ENCODE measurements at regions of chr3 and their contacts with region 1.

Region 1: GRCh38 chr3:142723968-142724681 is at the start of gene TRPC1:
- DNase-seq: peak; percentile 2 to 93 (median 70)
- ATAC-seq: peak; percentile 96
- H3K4me3 ChIP-seq: peak within 1 kb of the TSS; percentile 54 to 63
- H3K4me3 Mint-ChIP-seq: peak within 1 kb of the TSS; percentile 91
- H3K27ac ChIP-seq: peak within 1 kb of the TSS in 1 of 2 experiments; percentile 63
- H3K27ac Mint-ChIP-seq: peak within 1 kb of the TSS; percentile 92
- H3K4me1 ChIP-seq: peaks cover 9% of the 10 kb centered on the region
- H3K4me1 Mint-ChIP-seq: peaks cover 20% of the 10 kb centered on the region
- H3K27me3 ChIP-seq: peaks cover 0 to 3% of the 10 kb centered on the region in 2 experiments
- H3K27me3 Mint-ChIP-seq: peaks cover 28% of the 10 kb centered on the region
- CTCF ChIP-seq: no peak
- total RNA-seq, gene TRPC1: 3.3 to 3.4 TPM

Region 2: DNA sequence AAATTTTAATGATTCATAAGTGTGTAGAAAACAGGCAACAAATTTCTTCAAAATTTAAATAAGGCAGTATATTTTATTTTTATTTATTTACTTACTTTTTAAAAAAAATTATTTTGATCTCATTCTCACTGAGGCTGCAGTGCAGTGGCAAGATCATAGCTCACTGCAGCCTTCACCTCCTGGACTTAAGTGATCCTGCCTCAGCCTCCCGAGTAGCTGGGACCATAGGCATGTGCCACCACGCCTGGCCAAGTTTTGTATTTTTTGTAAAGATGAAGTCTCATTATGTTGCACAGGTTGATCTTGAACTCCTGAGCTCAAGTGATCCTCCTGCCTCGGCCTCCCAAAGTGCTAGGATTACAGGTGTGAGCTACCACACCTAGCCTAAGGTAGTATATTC is 215.0 kb before region 1 on chr3:
- CTCF ChIA-PET with region 1: no interaction called
- POLR2A ChIA-PET with region 1: no interaction called
- intact Hi-C with region 1: loop called in 1 of 2 experiments (anchors 5 kb)
- DNase-seq: peak in 2 of 9 experiments; percentile 15 to 36
- ATAC-seq: peak; percentile 62
- H3K4me3 ChIP-seq: peak overlapping the region in 1 of 2 experiments; percentile 51
- H3K4me3 Mint-ChIP-seq: peak overlapping the region; percentile 90
- H3K27ac ChIP-seq: peak overlapping the region in 1 of 2 experiments; percentile 74
- H3K27ac Mint-ChIP-seq: peak overlapping the region; percentile 95
- H3K4me1 ChIP-seq: no peaks in the 10 kb centered on the region
- H3K4me1 Mint-ChIP-seq: peaks cover 14% of the 10 kb centered on the region
- H3K27me3 ChIP-seq: no peaks in the 10 kb centered on the region
- H3K27me3 Mint-ChIP-seq: no peaks in the 10 kb centered on the region
- CTCF ChIP-seq: no peak

Region 3: DNA sequence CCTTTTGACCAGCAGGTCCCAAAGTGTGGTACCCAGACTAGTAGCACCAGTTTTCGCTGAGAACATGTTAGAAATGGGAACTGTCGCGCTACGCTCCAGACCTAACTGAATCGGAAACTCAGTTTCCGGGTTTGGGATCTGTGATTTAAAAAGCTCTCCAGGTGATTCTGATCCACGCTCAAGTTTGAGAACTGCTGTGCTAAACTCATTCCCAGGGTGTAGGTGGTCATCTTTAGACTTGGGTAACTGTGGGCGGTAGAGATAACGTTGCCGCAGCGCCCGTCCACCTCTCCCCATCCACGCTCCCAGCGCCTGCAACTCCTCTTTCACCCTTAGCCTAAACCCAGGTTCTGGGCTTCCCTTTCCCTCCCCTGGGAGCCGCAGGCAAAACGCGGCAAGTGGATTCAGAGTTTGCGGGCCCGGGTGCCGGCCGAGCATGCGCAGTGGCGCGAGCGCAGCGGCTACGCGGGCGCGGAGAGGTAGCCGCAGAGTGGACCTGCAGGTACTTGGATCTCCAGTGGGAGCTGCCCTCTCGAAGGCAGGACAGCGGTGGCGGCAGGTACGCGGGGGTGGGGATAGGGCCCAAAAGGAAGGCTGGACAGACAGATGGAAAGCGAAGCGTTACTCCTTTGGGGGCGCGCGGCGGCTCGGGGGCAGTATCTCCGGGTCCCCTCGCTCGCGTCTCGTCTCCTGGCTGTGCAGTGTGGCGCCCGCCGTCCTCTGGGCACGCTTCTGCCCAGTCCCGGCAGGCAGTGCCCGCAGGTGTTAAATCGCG is 128.0 kb before region 1 on chr3 and contains the start of gene PLS1:
- CTCF ChIA-PET with region 1: no interaction called
- POLR2A ChIA-PET with region 1: no interaction called
- intact Hi-C with region 1: loop called (anchors 2 to 5 kb)
- DNase-seq: peak; percentile 74 to 91 (median 83)
- ATAC-seq: peak; percentile 87
- H3K4me3 ChIP-seq: peak within 1 kb of the TSS; percentile 75 to 84
- H3K4me3 Mint-ChIP-seq: peak within 1 kb of the TSS; percentile 96
- H3K27ac ChIP-seq: peak within 1 kb of the TSS; percentile 28 to 34
- H3K27ac Mint-ChIP-seq: peak within 1 kb of the TSS; percentile 89
- H3K4me1 ChIP-seq: peaks cover 17% of the 10 kb centered on the region
- H3K4me1 Mint-ChIP-seq: peaks cover 17% of the 10 kb centered on the region
- H3K27me3 ChIP-seq: no peaks in the 10 kb centered on the region
- H3K27me3 Mint-ChIP-seq: peaks cover 11% of the 10 kb centered on the region
- CTCF ChIP-seq: no peak
- total RNA-seq, gene PLS1: 0.57 to 2.0 TPM

Region 4: GRCh38 chr3:142618917-142619461 is 105.1 kb before region 1 on chr3:
- CTCF ChIA-PET with region 1: no interaction called
- POLR2A ChIA-PET with region 1: no interaction called
- intact Hi-C with region 1: no loop called
- DNase-seq: no peak
- ATAC-seq: no peak
- H3K4me3 ChIP-seq: no peak overlapping the region
- H3K4me3 Mint-ChIP-seq: no peak overlapping the region
- H3K27ac ChIP-seq: no peak overlapping the region
- H3K27ac Mint-ChIP-seq: no peak overlapping the region
- H3K4me1 ChIP-seq: no peaks in the 10 kb centered on the region
- H3K4me1 Mint-ChIP-seq: no peaks in the 10 kb centered on the region
- H3K27me3 ChIP-seq: no peaks in the 10 kb centered on the region
- H3K27me3 Mint-ChIP-seq: no peaks in the 10 kb centered on the region
- CTCF ChIP-seq: no peak

Region 5: DNA sequence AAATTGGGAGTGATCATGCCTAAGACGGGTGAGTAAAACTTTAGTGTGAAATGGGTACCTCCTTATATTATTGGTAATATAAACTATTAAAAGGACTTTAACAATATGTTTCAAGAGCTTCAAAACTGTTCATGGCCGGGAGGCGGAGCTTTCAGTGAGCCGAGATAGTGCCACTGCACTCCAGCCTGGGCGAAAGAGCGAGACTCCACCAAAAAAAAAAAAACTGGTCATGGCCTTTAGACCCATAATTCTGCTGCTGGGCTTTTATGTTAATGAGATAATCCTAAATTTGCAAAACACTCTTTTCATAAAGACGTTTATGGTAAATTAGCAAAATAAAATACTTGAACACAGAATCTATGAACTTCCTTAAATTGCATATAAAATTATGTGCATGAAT is 22.5 kb after region 1 on chr3:
- CTCF ChIA-PET with region 1: no interaction called
- POLR2A ChIA-PET with region 1: no interaction called
- intact Hi-C with region 1: no loop called
- DNase-seq: no peak
- ATAC-seq: no peak
- H3K4me3 ChIP-seq: no peak overlapping the region
- H3K4me3 Mint-ChIP-seq: no peak overlapping the region
- H3K27ac ChIP-seq: no peak overlapping the region
- H3K27ac Mint-ChIP-seq: no peak overlapping the region
- H3K4me1 ChIP-seq: no peaks in the 10 kb centered on the region
- H3K4me1 Mint-ChIP-seq: no peaks in the 10 kb centered on the region
- H3K27me3 ChIP-seq: no peaks in the 10 kb centered on the region
- H3K27me3 Mint-ChIP-seq: no peaks in the 10 kb centered on the region
- CTCF ChIP-seq: no peak

Region 6: GRCh38 chr3:143433787-143434378 is 709.8 kb after region 1 on chr3:
- CTCF ChIA-PET with region 1: no interaction called
- POLR2A ChIA-PET with region 1: no interaction called
- intact Hi-C with region 1: no loop called
- DNase-seq: peak in 2 of 9 experiments; percentile 9 to 27
- ATAC-seq: no peak
- H3K4me3 ChIP-seq: no peak overlapping the region
- H3K4me3 Mint-ChIP-seq: no peak overlapping the region
- H3K27ac ChIP-seq: no peak overlapping the region
- H3K27ac Mint-ChIP-seq: no peak overlapping the region
- H3K4me1 ChIP-seq: no peaks in the 10 kb centered on the region
- H3K4me1 Mint-ChIP-seq: no peaks in the 10 kb centered on the region
- H3K27me3 ChIP-seq: no peaks in the 10 kb centered on the region
- H3K27me3 Mint-ChIP-seq: no peaks in the 10 kb centered on the region
- CTCF ChIP-seq: peak; percentile 40